Naive thymus-derived CD4-positive, alpha-beta T cell (primary cell): ENCODE measurements at regions of chr14 and their contacts with region 1.

Region 1: DNA sequence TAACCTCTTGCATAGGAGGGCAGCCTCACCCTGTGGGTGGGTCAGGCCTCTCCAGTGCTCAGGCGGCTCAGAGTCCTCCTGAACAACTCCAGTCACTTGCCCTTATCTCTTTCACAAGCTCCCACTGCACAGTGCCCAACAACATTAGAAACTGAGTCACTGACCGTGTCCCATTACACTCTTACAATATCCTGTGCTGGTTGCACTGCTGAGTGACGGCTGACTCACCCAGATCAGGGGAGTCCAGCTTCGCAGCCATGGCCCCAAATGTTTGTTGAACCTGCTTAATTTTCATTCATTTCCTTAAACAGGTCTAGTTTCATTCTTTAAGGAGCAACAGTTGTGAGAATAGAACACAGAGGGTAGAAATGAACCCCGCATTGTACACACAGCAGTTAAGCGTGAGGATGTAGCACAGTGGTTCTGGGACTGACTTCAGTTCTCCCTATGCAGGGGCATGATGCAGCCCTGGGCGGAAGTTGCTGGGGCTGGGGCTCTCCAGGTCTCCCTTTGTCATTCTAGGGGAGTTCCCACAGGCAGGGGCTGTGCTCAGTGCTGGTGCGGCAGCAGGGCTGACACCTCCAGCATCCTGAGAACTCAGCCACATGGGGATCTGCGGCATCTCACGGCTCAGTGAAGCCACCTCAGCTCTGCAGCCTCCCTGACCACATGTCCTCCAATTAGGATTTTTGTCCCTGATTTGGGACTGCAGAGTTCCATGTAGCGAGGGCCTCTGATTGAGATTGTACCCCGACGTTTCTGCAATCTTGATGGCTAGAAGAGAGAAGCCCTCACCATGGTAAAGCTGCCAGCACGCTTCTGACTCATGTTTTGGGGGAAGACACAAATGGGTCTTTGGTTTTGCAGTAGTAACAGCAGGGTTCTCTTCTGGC is 16.1 kb downstream of the GPR68 start:
- DNase-seq: peak; percentile 42 to 86 (median 60)
- ATAC-seq: peak; percentile 89
- H3K4me3 ChIP-seq: peak overlapping the region; percentile 34
- H3K4me3 Mint-ChIP-seq: peak overlapping the region; percentile 48 to 87 (median 73)
- H3K27ac ChIP-seq: peak overlapping the region; percentile 57
- H3K27ac Mint-ChIP-seq: peak overlapping the region; percentile 9 to 98 (median 88)
- H3K4me1 ChIP-seq: peaks cover 89 to 92% of the 10 kb centered on the region in 2 donors
- H3K4me1 Mint-ChIP-seq: peaks cover 69 to 99% (median 93%) of the 10 kb centered on the region in 7 donors
- H3K27me3 ChIP-seq: no peaks in the 10 kb centered on the region
- H3K27me3 Mint-ChIP-seq: no peaks in the 10 kb centered on the region

Region 2: GRCh38 chr14:91193069-91193468 is 35.3 kb before region 1 on chr14:
- CTCF ChIA-PET with region 1: no interaction called
- POLR2A ChIA-PET with region 1: no interaction called
- intact Hi-C with region 1: loop called (anchors 1 kb)
- DNase-seq: no peak
- ATAC-seq: no peak
- H3K4me3 ChIP-seq: no peak overlapping the region
- H3K4me3 Mint-ChIP-seq: peak overlapping the region in 2 of 10 donors; percentile 12 to 23
- H3K27ac ChIP-seq: no peak overlapping the region
- H3K27ac Mint-ChIP-seq: peak overlapping the region in 1 of 9 donors; percentile 13
- H3K4me1 ChIP-seq: peaks cover 8 to 9% of the 10 kb centered on the region in 2 donors
- H3K4me1 Mint-ChIP-seq: peaks cover 12 to 51% (median 22%) of the 10 kb centered on the region in 7 donors
- H3K27me3 ChIP-seq: no peaks in the 10 kb centered on the region
- H3K27me3 Mint-ChIP-seq: no peaks in the 10 kb centered on the region

Region 3: GRCh38 chr14:91205459-91205858 is 22.9 kb before region 1 on chr14:
- CTCF ChIA-PET with region 1: no interaction called
- POLR2A ChIA-PET with region 1: no interaction called
- intact Hi-C with region 1: loop called (anchors 1 to 2 kb)
- DNase-seq: no peak
- ATAC-seq: no peak
- H3K4me3 ChIP-seq: no peak overlapping the region
- H3K4me3 Mint-ChIP-seq: no peak overlapping the region
- H3K27ac ChIP-seq: no peak overlapping the region
- H3K27ac Mint-ChIP-seq: peak overlapping the region in 1 of 9 donors; percentile 73
- H3K4me1 ChIP-seq: peaks cover 0 to 7% of the 10 kb centered on the region in 2 donors
- H3K4me1 Mint-ChIP-seq: peaks cover 6 to 55% (median 17%) of the 10 kb centered on the region in 7 donors
- H3K27me3 ChIP-seq: no peaks in the 10 kb centered on the region
- H3K27me3 Mint-ChIP-seq: no peaks in the 10 kb centered on the region

Region 4: GRCh38 chr14:91249841-91250616 is 21.7 kb after region 1 on chr14:
- CTCF ChIA-PET with region 1: interaction called, 3 read pairs
- POLR2A ChIA-PET with region 1: interaction called, 103 read pairs
- intact Hi-C with region 1: loop called in 1 of 2 experiments (anchors 1 kb)
- DNase-seq: peak in 4 of 9 donors; percentile 20 to 52 (median 40)
- ATAC-seq: peak; percentile 8
- H3K4me3 ChIP-seq: peak overlapping the region; percentile 36
- H3K4me3 Mint-ChIP-seq: peak overlapping the region; percentile 27 to 84 (median 57)
- H3K27ac ChIP-seq: peak overlapping the region; percentile 55
- H3K27ac Mint-ChIP-seq: peak overlapping the region; percentile 53 to 98 (median 91)
- H3K4me1 ChIP-seq: peaks cover 63 to 81% of the 10 kb centered on the region in 2 donors
- H3K4me1 Mint-ChIP-seq: peaks cover 54 to 87% (median 80%) of the 10 kb centered on the region in 7 donors
- H3K27me3 ChIP-seq: no peaks in the 10 kb centered on the region
- H3K27me3 Mint-ChIP-seq: no peaks in the 10 kb centered on the region

Region 5: DNA sequence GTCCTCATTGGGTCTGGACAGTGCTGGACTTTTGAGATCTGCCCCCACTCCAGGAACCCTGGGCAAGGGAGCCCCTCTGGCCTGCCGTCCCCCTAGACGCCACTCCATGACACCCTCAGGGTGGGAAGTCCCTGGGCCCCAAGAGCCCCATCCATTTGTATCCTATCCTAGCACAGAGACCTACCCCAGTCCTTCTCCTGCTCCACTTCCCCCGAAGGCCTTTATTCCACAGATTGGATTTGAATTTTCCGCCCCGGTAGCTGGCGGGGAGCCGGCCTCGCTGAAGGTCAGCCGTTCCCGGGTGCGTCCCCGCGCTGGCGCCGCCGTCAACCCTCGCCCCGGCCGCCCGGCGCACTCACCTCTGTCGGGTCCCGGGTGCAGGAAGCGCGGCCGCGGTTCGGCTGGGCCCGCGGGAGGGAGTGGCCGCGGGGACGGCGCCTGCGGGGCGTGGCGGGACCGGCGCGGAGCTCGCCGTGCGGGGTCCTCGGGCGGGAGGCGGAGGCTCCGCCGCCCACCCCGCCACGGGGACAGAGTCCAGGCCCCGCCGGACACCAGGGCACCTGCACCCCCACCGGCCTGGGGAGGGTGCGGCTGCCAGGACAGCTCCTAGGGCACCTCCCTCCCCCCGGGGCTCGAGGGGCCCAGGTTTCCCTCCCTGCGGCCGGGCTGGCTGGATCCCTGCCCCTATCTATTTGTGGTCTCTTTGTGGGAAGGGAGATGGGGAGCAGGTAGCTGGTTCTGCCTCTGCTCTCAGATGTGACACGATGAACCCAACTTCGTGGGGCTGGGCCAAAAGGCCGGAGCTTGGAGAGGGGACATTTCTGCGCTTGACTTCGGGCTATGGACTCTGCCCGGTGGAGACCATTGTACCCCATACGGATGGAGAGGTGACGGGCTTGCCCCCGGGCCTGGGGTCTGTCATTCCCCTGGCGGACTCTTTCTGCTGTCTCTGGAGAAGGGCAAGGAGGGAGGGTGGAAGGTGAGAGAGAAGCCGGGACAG is 36.1 kb after region 1 on chr14:
- CTCF ChIA-PET with region 1: interaction called, 4 read pairs
- POLR2A ChIA-PET with region 1: interaction called, 6 read pairs
- intact Hi-C with region 1: loop called in 1 of 2 experiments (anchors 1 kb)
- DNase-seq: peak in 1 of 9 donors; percentile 23
- ATAC-seq: peak; percentile 58
- H3K4me3 ChIP-seq: no peak overlapping the region
- H3K4me3 Mint-ChIP-seq: peak overlapping the region; percentile 61 to 80 (median 74)
- H3K27ac ChIP-seq: no peak overlapping the region
- H3K27ac Mint-ChIP-seq: peak overlapping the region in 8 of 9 donors; percentile 56 to 89 (median 72)
- H3K4me1 ChIP-seq: peaks cover 5 to 12% of the 10 kb centered on the region in 2 donors
- H3K4me1 Mint-ChIP-seq: peaks cover 28 to 73% (median 43%) of the 10 kb centered on the region in 7 donors
- H3K27me3 ChIP-seq: no peaks in the 10 kb centered on the region
- H3K27me3 Mint-ChIP-seq: peaks cover 0 to 13% (median 0%) of the 10 kb centered on the region in 5 donors

Region 6: DNA sequence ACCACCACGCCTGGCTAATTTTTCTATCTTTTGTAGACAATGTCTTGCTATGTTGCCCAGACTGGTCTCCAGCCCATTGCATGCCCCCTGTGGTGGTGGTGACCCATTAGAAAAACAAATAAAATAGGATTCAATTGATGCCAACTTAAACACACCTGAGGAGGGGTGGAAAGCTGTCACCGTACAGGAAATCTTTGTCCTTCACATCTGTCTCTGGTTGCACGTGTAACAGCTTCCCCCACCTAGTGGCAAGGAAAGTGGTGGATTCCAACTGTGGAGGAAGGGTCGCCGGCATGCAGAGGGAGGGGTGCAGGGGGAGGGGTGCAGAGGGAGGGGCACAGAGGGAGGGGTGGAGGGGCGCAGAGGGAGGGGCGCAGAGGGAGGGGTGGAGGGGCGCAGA is 42.3 kb after region 1 on chr14:
- CTCF ChIA-PET with region 1: interaction called, 4 read pairs
- POLR2A ChIA-PET with region 1: interaction called, 3 read pairs
- intact Hi-C with region 1: loop called in 1 of 2 experiments (anchors 1 kb)
- DNase-seq: no peak
- ATAC-seq: no peak
- H3K4me3 ChIP-seq: no peak overlapping the region
- H3K4me3 Mint-ChIP-seq: no peak overlapping the region
- H3K27ac ChIP-seq: no peak overlapping the region
- H3K27ac Mint-ChIP-seq: peak overlapping the region in 3 of 9 donors; percentile 45 to 80 (median 69)
- H3K4me1 ChIP-seq: no peaks in the 10 kb centered on the region
- H3K4me1 Mint-ChIP-seq: peaks cover 14 to 30% (median 27%) of the 10 kb centered on the region in 7 donors
- H3K27me3 ChIP-seq: no peaks in the 10 kb centered on the region
- H3K27me3 Mint-ChIP-seq: peaks cover 0 to 1% (median 0%) of the 10 kb centered on the region in 5 donors

Region 7: DNA sequence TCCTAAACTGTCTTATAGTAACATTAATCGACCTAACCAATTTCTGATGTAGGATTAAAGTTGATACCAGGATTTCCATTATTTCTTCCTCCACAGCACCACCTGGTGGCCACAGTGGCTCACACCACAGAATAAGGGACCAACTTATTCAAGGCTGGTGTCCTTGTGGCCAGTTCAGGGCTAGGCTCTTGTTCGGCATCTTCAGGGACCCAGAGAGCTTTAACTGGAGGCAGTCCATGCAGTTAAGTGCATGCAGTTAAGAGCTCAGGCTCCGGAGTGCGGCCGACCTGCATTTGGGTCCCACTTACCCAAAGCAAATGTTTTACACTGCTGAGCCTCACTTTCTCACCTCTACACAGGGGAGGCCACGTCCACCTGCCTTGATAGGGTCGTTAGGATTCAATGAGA is 58.2 kb after region 1 on chr14:
- CTCF ChIA-PET with region 1: interaction called, 3 read pairs
- POLR2A ChIA-PET with region 1: interaction called, 3 read pairs
- intact Hi-C with region 1: loop called in 1 of 2 experiments (anchors 1 kb)
- DNase-seq: peak; percentile 55 to 77 (median 69)
- ATAC-seq: peak; percentile 89
- H3K4me3 ChIP-seq: no peak overlapping the region
- H3K4me3 Mint-ChIP-seq: peak overlapping the region in 1 of 10 donors; percentile 35
- H3K27ac ChIP-seq: no peak overlapping the region
- H3K27ac Mint-ChIP-seq: peak overlapping the region; percentile 2 to 86 (median 63)
- H3K4me1 ChIP-seq: no peaks in the 10 kb centered on the region
- H3K4me1 Mint-ChIP-seq: peaks cover 11 to 25% (median 17%) of the 10 kb centered on the region in 7 donors
- H3K27me3 ChIP-seq: no peaks in the 10 kb centered on the region
- H3K27me3 Mint-ChIP-seq: no peaks in the 10 kb centered on the region

Region 8: DNA sequence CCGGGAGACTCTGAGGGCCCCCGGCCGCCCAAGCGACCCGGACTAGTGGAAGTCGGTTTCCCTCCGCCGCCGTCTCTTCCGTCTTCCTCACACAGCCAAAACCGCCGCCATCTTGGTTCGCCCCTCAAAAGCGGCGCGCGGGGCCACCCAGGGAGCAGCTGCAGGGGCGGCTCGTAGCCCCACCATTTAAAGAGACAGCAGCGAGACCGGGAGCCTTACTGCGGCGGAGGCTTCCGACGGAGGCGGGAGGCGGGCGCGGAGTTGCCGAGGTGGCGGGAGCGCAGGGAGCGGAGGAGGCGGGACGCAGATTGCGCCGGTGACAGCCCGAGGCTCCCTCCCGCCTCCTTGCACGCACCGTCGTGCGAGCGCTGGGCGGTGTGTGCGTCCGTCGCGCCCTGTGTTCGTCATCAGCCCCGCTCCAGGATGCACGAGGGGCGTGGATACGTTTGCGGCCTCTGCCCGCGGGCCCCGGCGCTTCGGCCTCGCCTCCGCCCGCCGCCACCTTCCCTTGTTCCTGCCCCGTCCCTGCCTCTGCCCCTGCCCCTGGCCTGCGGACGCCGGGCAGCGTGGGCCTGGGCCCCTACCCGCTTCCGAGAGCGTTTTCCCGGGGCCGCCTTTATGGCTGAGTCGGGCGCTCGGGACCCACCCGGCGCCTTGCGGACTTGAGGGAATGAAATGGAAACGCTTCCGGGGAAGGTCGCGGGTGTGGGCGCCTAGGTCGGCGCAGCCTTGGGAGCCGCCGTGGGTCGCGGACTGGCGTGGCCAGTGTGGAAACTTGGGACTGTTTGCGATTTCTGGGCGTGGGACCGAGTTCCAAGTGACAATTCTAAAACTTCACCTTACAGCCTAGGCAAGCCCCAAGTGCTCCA is 282.1 kb after region 1 on chr14 and contains the start of gene PPP4R3A:
- CTCF ChIA-PET with region 1: no interaction called
- POLR2A ChIA-PET with region 1: no interaction called
- intact Hi-C with region 1: no loop called
- DNase-seq: peak; percentile 86 to 96 (median 95)
- ATAC-seq: peak; percentile 92
- H3K4me3 ChIP-seq: peak within 1 kb of the TSS; percentile 62
- H3K4me3 Mint-ChIP-seq: peak within 1 kb of the TSS; percentile 93 to 100 (median 98)
- H3K27ac ChIP-seq: peak within 1 kb of the TSS; percentile 99
- H3K27ac Mint-ChIP-seq: peak within 1 kb of the TSS; percentile 100
- H3K4me1 ChIP-seq: peaks cover 14 to 22% of the 10 kb centered on the region in 2 donors
- H3K4me1 Mint-ChIP-seq: peaks cover 15 to 38% (median 32%) of the 10 kb centered on the region in 7 donors
- H3K27me3 ChIP-seq: no peaks in the 10 kb centered on the region
- H3K27me3 Mint-ChIP-seq: no peaks in the 10 kb centered on the region
- total RNA-seq, gene PPP4R3A: 129 to 214 (median 167) TPM